ENCODE measurements at regions of chr2 and their contacts with region 1.

Region 1: GRCh38 chr2:153819501-153819900 is 52.2 kb upstream of the GALNT13 start:
- DNase-seq: peak in 1 of 2 experiments; percentile 3
- H3K4me3 ChIP-seq: no peak overlapping the region
- H3K4me3 Mint-ChIP-seq: no peak overlapping the region
- H3K27ac Mint-ChIP-seq: no peak overlapping the region
- H3K4me1 ChIP-seq: no peaks in the 10 kb centered on the region
- H3K4me1 Mint-ChIP-seq: no peaks in the 10 kb centered on the region
- H3K27me3 ChIP-seq: no peaks in the 10 kb centered on the region
- H3K27me3 Mint-ChIP-seq: no peaks in the 10 kb centered on the region
- CTCF ChIP-seq: peak; percentile 23 to 24

Region 2: GRCh38 chr2:153478334-153479261 is 340.9 kb before region 1 on chr2 and contains the start of gene RPRM:
- CTCF ChIA-PET with region 1: no interaction called
- POLR2A ChIA-PET with region 1: no interaction called
- intact Hi-C with region 1: no loop called
- DNase-seq: peak; percentile 51 to 67
- H3K4me3 ChIP-seq: no peak within 1 kb of the TSS
- H3K4me3 Mint-ChIP-seq: peak within 1 kb of the TSS; percentile 61
- H3K27ac Mint-ChIP-seq: no peak within 1 kb of the TSS
- H3K4me1 ChIP-seq: no peaks in the 10 kb centered on the region
- H3K4me1 Mint-ChIP-seq: peaks cover 6% of the 10 kb centered on the region
- H3K27me3 ChIP-seq: no peaks in the 10 kb centered on the region
- H3K27me3 Mint-ChIP-seq: peaks cover 7% of the 10 kb centered on the region
- CTCF ChIP-seq: peak; percentile 51 to 68
- total RNA-seq, gene RPRM: not detected in 2 replicates

Region 3: DNA sequence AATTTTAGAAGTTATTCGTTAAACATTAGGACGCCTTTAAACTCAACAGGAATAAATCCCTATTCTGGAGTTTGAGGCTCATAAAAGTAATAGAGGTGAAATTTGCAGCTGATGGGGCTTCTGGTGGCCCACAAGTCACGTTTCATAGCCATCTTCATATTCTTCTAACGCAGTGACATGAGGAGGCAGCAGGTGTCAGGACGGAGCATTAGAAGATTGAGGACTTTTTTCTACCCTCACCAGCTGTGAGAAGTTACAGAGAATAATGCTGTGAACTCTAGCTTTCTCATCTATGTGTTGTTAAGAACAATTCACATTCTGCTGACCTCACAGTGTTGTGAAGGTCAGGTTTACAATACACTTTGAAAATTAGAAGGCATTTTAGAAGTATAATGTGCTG is 101.0 kb before region 1 on chr2:
- CTCF ChIA-PET with region 1: no interaction called
- POLR2A ChIA-PET with region 1: no interaction called
- intact Hi-C with region 1: loop called (anchors 1 kb)
- DNase-seq: peak in 1 of 2 experiments; percentile 1
- H3K4me3 ChIP-seq: no peak overlapping the region
- H3K4me3 Mint-ChIP-seq: no peak overlapping the region
- H3K27ac Mint-ChIP-seq: no peak overlapping the region
- H3K4me1 ChIP-seq: no peaks in the 10 kb centered on the region
- H3K4me1 Mint-ChIP-seq: no peaks in the 10 kb centered on the region
- H3K27me3 ChIP-seq: no peaks in the 10 kb centered on the region
- H3K27me3 Mint-ChIP-seq: no peaks in the 10 kb centered on the region
- CTCF ChIP-seq: peak in 1 of 2 experiments; percentile 21

Region 4: DNA sequence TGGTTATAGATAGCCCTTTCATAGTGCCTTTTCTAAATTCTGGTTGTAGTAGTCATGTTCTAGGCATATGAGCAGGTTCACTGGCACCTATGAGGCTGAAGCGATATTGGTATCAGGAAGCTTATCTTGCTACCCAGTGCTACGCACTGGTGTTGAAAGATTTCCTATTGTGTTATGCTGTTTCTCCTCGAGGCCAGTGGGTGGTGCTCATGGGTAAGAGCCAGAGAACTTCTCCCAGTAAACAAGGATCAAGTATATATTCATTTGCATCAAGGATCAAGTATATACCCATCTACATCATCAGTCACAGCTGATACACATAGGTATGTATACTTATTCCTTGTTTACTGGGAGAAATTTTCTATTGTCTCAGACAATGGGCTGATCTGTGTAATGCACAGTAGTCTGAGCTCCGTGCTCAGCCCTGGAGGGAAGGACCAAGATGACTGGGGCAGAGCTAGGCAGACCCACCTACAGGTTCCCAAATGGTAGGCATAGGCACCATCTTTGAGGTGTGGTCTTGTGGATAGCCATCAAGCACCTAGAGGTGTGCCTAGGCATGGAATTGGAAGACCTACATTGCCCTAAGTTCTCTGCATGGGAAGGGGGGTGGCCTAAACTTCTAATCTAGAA is 49.0 kb before region 1 on chr2:
- CTCF ChIA-PET with region 1: no interaction called
- POLR2A ChIA-PET with region 1: no interaction called
- intact Hi-C with region 1: loop called (anchors 1 kb)
- DNase-seq: no peak
- H3K4me3 ChIP-seq: no peak overlapping the region
- H3K4me3 Mint-ChIP-seq: no peak overlapping the region
- H3K27ac Mint-ChIP-seq: no peak overlapping the region
- H3K4me1 ChIP-seq: no peaks in the 10 kb centered on the region
- H3K4me1 Mint-ChIP-seq: no peaks in the 10 kb centered on the region
- H3K27me3 ChIP-seq: no peaks in the 10 kb centered on the region
- H3K27me3 Mint-ChIP-seq: no peaks in the 10 kb centered on the region
- CTCF ChIP-seq: no peak

Region 5: GRCh38 chr2:153787612-153788011 is 31.9 kb before region 1 on chr2:
- CTCF ChIA-PET with region 1: no interaction called
- POLR2A ChIA-PET with region 1: no interaction called
- intact Hi-C with region 1: loop called (anchors 2 kb)
- DNase-seq: no peak
- H3K4me3 ChIP-seq: no peak overlapping the region
- H3K4me3 Mint-ChIP-seq: no peak overlapping the region
- H3K27ac Mint-ChIP-seq: no peak overlapping the region
- H3K4me1 ChIP-seq: no peaks in the 10 kb centered on the region
- H3K4me1 Mint-ChIP-seq: no peaks in the 10 kb centered on the region
- H3K27me3 ChIP-seq: no peaks in the 10 kb centered on the region
- H3K27me3 Mint-ChIP-seq: no peaks in the 10 kb centered on the region
- CTCF ChIP-seq: no peak

Measured in Caco-2 (cell line).